CD4-positive, alpha-beta memory T cell (primary cell): ENCODE measurements at regions of chr20 and their contacts with region 1.

Region 1: DNA sequence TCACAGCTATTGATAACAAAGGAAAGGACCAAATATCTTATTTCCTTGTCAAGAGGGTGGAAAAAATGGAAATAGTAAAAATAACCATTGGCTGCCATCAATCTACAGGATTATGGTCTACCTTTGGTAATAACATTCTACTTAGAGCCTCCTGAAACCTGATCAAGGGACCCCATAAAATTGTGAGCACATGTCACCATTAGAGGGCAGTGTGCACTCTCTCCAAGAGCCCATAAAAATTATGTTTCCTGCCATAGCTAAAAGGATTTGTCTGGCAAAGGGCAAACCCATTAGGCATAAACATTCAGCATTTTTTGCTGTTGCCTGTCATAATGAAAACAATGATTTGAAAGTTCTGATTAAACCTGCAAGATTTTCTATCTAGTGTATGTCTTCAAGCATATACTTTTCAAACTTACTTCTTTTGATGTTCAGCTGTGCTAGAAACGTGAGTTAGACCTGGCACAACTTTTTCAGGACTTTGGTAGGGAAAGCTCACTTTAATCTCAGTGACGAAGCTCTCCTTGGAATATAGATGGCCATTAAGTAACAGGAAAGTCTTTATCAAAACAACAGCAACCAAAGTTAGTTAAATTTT is 120.7 kb upstream of the ZFP64 start:
- DNase-seq: peak; percentile 44 to 69 (median 64)
- H3K4me3 ChIP-seq: no peak overlapping the region
- H3K4me3 Mint-ChIP-seq: no peak overlapping the region
- H3K27ac ChIP-seq: no peak overlapping the region
- H3K27ac Mint-ChIP-seq: no peak overlapping the region
- H3K4me1 ChIP-seq: peaks cover 2% of the 10 kb centered on the region
- H3K4me1 Mint-ChIP-seq: peaks cover 5 to 26% (median 12%) of the 10 kb centered on the region in 4 donors
- H3K27me3 ChIP-seq: no peaks in the 10 kb centered on the region
- H3K27me3 Mint-ChIP-seq: no peaks in the 10 kb centered on the region

Region 2: GRCh38 chr20:52340036-52340648 is 27.9 kb after region 1 on chr20:
- CTCF ChIA-PET with region 1: interaction called, 12 read pairs
- POLR2A ChIA-PET with region 1: no interaction called
- intact Hi-C with region 1: no loop called
- DNase-seq: no peak
- H3K4me3 ChIP-seq: no peak overlapping the region
- H3K4me3 Mint-ChIP-seq: no peak overlapping the region
- H3K27ac ChIP-seq: no peak overlapping the region
- H3K27ac Mint-ChIP-seq: no peak overlapping the region
- H3K4me1 ChIP-seq: no peaks in the 10 kb centered on the region
- H3K4me1 Mint-ChIP-seq: peaks cover 0 to 7% (median 0%) of the 10 kb centered on the region in 4 donors
- H3K27me3 ChIP-seq: no peaks in the 10 kb centered on the region
- H3K27me3 Mint-ChIP-seq: peaks cover 0 to 2% of the 10 kb centered on the region in 2 donors

Region 3: GRCh38 chr20:52649727-52650126 is 337.5 kb after region 1 on chr20:
- CTCF ChIA-PET with region 1: no interaction called
- POLR2A ChIA-PET with region 1: no interaction called
- intact Hi-C with region 1: loop called (anchors 10 kb)
- DNase-seq: no peak
- H3K4me3 ChIP-seq: no peak overlapping the region
- H3K4me3 Mint-ChIP-seq: no peak overlapping the region
- H3K27ac ChIP-seq: no peak overlapping the region
- H3K27ac Mint-ChIP-seq: no peak overlapping the region
- H3K4me1 ChIP-seq: no peaks in the 10 kb centered on the region
- H3K4me1 Mint-ChIP-seq: no peaks in the 10 kb centered on the region
- H3K27me3 ChIP-seq: no peaks in the 10 kb centered on the region
- H3K27me3 Mint-ChIP-seq: peaks cover 0 to 1% of the 10 kb centered on the region in 2 donors

Region 4: DNA sequence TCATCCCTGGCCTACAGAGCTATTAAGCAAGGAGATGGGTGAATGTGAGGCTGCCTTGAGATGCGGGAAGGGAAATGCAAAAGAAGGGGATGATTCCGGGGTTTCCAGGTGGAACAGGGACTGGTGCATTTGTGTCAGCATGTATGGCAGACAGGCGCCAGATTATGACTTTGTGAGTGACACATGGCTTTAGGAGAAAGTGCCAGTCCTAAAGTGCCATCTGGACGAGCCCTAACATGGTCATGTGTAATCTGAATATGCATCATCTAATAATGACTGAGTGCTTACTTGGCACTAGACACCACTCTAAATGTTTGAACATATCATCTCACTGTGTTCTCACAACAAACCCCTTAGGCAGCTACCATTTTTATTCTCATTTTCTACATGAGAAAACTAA is 464.9 kb after region 1 on chr20:
- CTCF ChIA-PET with region 1: no interaction called
- POLR2A ChIA-PET with region 1: no interaction called
- intact Hi-C with region 1: no loop called
- DNase-seq: no peak
- H3K4me3 ChIP-seq: no peak overlapping the region
- H3K4me3 Mint-ChIP-seq: no peak overlapping the region
- H3K27ac ChIP-seq: no peak overlapping the region
- H3K27ac Mint-ChIP-seq: no peak overlapping the region
- H3K4me1 ChIP-seq: no peaks in the 10 kb centered on the region
- H3K4me1 Mint-ChIP-seq: no peaks in the 10 kb centered on the region
- H3K27me3 ChIP-seq: no peaks in the 10 kb centered on the region
- H3K27me3 Mint-ChIP-seq: peaks cover 5 to 8% of the 10 kb centered on the region in 2 donors

Region 5: DNA sequence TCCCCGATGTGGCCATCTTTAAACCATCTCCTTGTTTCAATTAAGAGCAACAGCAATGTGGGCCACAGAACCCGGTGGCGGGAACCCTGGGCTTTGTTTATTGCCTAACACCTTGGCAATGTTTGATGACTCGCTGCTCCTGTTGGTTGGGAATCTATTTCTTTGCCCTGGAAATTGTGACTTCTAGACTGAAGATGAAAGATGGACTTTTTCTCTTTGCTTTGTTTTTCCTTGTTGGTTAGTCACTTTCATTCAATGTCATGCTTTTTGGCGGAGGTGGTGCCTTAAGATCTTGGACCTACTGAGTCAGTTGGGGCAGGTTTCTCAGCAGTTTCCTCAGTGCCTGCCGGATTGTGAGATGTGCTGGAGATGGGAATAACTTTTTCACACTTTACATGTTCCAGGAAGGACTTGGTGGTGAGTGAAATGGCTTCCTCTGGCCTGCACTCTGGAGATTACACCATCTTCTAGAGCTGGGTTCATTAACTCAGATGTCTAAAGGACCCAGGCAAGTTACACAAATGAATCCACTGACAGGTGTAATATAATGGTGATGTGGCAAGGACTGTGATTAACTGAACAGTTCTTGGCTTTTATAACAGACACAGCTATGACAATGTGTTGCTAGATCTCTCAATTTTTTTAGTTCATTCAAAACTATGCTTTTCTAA is 716.2 kb after region 1 on chr20:
- CTCF ChIA-PET with region 1: interaction called, 10 read pairs
- POLR2A ChIA-PET with region 1: no interaction called
- intact Hi-C with region 1: loop called (anchors 1 kb)
- DNase-seq: no peak
- H3K4me3 ChIP-seq: no peak overlapping the region
- H3K4me3 Mint-ChIP-seq: no peak overlapping the region
- H3K27ac ChIP-seq: no peak overlapping the region
- H3K27ac Mint-ChIP-seq: peak overlapping the region in 2 of 7 donors; percentile 37 to 63
- H3K4me1 ChIP-seq: peaks cover 12% of the 10 kb centered on the region
- H3K4me1 Mint-ChIP-seq: peaks cover 0 to 20% (median 6%) of the 10 kb centered on the region in 4 donors
- H3K27me3 ChIP-seq: no peaks in the 10 kb centered on the region
- H3K27me3 Mint-ChIP-seq: peaks cover 4 to 11% of the 10 kb centered on the region in 2 donors

Region 6: DNA sequence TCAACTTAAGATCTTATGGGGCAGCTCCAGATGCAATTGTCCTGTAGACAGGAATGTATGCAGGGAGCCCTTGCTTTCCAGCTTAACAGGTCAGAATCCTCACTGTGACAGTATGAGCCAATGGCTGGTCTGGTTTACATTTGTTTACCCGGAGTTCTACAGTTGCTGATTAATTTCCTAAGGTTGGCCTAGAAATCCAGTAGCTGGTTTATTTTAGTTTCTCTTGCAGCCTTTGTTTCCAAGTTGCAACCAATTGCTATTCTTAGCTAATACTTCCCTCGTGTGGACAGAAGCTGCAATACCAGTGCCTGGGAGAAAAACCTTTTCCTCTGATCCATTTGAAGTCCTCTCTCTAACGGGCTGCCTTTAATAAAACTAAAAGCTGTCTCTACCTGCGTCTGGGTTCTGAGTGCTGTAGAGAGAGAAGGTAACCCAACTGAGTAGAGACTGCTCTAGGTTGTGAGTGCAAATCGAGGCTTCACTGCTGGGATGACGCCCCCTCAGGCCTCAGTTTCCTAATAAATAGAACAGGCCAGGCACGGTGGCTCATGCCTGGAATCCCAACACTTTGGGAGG is 1235.5 kb after region 1 on chr20:
- CTCF ChIA-PET with region 1: interaction called, 10 read pairs
- POLR2A ChIA-PET with region 1: interaction called, 3 read pairs
- intact Hi-C with region 1: loop called (anchors 2 kb)
- DNase-seq: peak in 4 of 5 donors; percentile 29 to 37 (median 34)
- H3K4me3 ChIP-seq: no peak overlapping the region
- H3K4me3 Mint-ChIP-seq: no peak overlapping the region
- H3K27ac ChIP-seq: no peak overlapping the region
- H3K27ac Mint-ChIP-seq: no peak overlapping the region
- H3K4me1 ChIP-seq: no peaks in the 10 kb centered on the region
- H3K4me1 Mint-ChIP-seq: peaks cover 0 to 4% (median 0%) of the 10 kb centered on the region in 4 donors
- H3K27me3 ChIP-seq: no peaks in the 10 kb centered on the region
- H3K27me3 Mint-ChIP-seq: no peaks in the 10 kb centered on the region